ENCODE measurements at regions of chr10 and their contacts with region 1.

Region 1: DNA sequence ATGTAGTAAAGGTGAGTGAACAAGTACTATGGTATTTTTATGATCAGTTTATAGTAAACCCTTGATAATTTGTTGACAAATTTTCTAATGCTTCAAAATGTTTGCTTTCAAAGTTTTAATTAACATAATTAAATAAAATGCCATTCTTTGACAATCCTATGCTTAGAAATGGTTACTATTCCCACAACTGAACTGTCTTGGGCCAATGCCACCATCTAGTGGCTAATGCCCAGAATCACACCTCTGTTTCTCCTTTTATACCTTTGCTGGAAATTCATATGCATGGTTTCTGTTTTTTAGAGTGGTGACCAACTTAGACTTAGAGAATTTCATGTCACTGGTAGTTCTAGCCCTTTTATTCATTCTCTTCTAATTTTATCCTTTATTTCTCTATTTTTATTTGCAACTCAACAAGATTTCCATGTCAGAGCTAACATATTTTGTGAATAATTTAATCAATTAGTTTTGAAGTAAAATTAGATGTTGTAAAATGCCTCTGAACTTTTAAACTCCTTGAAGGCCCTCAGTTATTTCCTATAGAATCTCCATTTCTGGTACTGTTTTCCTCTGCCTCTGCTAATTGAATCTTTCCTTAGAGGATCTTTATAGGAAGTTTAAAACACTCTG is 31.1 kb downstream of the PCGF5 start:
- DNase-seq: peak; percentile 52
- H3K4me3 ChIP-seq: no peak overlapping the region
- H3K27ac ChIP-seq: no peak overlapping the region
- H3K4me1 ChIP-seq: peaks cover 0 to 3% (median 0%) of the 10 kb centered on the region in 4 donors
- H3K27me3 ChIP-seq: no peaks in the 10 kb centered on the region
- CTCF ChIP-seq: peak; percentile 88 to 94 (median 91)
- EP300 ChIP-seq: no peak
- POLR2A ChIP-seq: no peak

Region 2: GRCh38 chr10:90885176-90885575 is 366.4 kb before region 1 on chr10:
- in situ Hi-C with region 1: loop called in 1 of 4 experiments (anchors 25 kb)
- intact Hi-C with region 1: no loop called
- DNase-seq: no peak
- H3K4me3 ChIP-seq: no peak overlapping the region
- H3K27ac ChIP-seq: no peak overlapping the region
- H3K4me1 ChIP-seq: peaks cover 0 to 5% (median 2%) of the 10 kb centered on the region in 4 donors
- H3K27me3 ChIP-seq: no peaks in the 10 kb centered on the region
- CTCF ChIP-seq: no peak
- EP300 ChIP-seq: no peak
- POLR2A ChIP-seq: no peak

Region 3: GRCh38 chr10:90905925-90906324 is 345.6 kb before region 1 on chr10:
- in situ Hi-C with region 1: loop called in 3 of 4 experiments (anchors 10 to 25 kb)
- intact Hi-C with region 1: loop called (anchors 5 kb)
- DNase-seq: no peak
- H3K4me3 ChIP-seq: no peak overlapping the region
- H3K27ac ChIP-seq: no peak overlapping the region
- H3K4me1 ChIP-seq: no peaks in the 10 kb centered on the region
- H3K27me3 ChIP-seq: no peaks in the 10 kb centered on the region
- CTCF ChIP-seq: no peak
- EP300 ChIP-seq: no peak
- POLR2A ChIP-seq: no peak

Region 4: DNA sequence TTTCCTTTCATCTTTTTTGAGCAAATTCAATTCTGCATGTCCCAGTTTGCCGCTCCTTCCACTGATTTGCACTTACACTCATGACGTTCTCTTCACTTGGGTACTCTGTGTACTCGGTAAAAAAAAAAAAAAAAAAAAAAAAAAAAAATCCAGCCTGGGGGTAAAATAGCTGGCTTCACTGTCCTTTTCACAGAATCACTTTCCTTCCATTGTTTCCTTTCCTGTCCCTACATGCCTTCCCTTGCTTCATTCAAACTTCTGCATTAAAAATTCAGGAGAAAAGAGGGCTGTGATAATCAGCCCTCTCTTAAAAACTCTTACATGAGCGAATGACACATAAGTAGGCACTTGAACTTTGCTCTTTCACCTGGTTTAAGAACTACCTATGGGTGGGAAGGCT is 339.4 kb before region 1 on chr10:
- in situ Hi-C with region 1: loop called in 3 of 4 experiments (anchors 10 to 25 kb)
- intact Hi-C with region 1: loop called (anchors 5 kb)
- DNase-seq: no peak
- H3K4me3 ChIP-seq: no peak overlapping the region
- H3K27ac ChIP-seq: no peak overlapping the region
- H3K4me1 ChIP-seq: peaks cover 0 to 3% (median 0%) of the 10 kb centered on the region in 4 donors
- H3K27me3 ChIP-seq: no peaks in the 10 kb centered on the region
- CTCF ChIP-seq: no peak
- EP300 ChIP-seq: no peak
- POLR2A ChIP-seq: no peak

Region 5: DNA sequence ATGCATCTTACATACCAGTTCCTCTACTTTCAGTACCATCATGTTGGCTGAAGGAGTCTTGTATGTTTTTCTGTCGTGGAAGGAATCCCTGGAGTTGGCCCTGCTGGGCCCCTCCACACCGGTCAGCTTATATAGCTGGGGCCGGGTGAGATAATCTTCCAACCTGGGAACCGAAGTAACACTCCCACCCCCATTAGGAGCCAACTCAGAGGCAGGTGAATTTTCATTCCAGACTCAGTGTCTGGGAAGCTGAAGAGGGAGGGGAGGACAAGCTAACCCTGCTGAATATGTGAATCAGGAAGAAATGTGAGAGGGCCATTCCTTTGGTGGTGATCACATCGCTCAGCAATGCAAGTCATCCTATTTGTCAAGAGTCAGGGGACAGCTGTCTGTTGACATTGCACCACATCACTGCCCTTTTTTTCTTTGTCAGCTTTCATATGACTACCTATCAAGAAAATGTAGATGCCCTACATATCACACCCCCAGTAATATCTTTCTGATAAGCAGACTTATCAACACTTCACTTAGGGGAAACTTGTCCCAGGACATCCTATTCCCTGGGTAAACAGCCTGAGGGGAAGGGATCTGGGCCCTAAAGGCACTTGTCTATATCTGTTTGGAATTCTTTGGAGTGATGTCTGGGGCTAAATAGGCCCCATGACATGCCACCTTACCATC is 330.4 kb before region 1 on chr10 and contains the start of gene ANKRD1:
- in situ Hi-C with region 1: loop called in 2 of 4 experiments (anchors 10 to 25 kb)
- intact Hi-C with region 1: no loop called
- DNase-seq: no peak
- H3K4me3 ChIP-seq: no peak within 1 kb of the TSS
- H3K27ac ChIP-seq: no peak within 1 kb of the TSS
- H3K4me1 ChIP-seq: no peaks in the 10 kb centered on the region
- H3K27me3 ChIP-seq: peaks cover 4% of the 10 kb centered on the region
- CTCF ChIP-seq: no peak
- EP300 ChIP-seq: no peak
- POLR2A ChIP-seq: no peak
- total RNA-seq, gene ANKRD1: not detected

Region 6: GRCh38 chr10:91006001-91006751 is 245.4 kb before region 1 on chr10:
- in situ Hi-C with region 1: loop called (anchors 5 to 10 kb)
- intact Hi-C with region 1: loop called (anchors 5 kb)
- DNase-seq: peak; percentile 59
- H3K4me3 ChIP-seq: no peak overlapping the region
- H3K27ac ChIP-seq: no peak overlapping the region
- H3K4me1 ChIP-seq: peaks cover 0 to 6% (median 0%) of the 10 kb centered on the region in 4 donors
- H3K27me3 ChIP-seq: no peaks in the 10 kb centered on the region
- CTCF ChIP-seq: peak; percentile 83 to 95 (median 93)
- EP300 ChIP-seq: no peak
- POLR2A ChIP-seq: no peak

Region 7: GRCh38 chr10:91088300-91089140 is 163.0 kb before region 1 on chr10:
- in situ Hi-C with region 1: loop called in 2 of 4 experiments (anchors 5 to 10 kb)
- intact Hi-C with region 1: loop called (anchors 10 kb)
- DNase-seq: no peak
- H3K4me3 ChIP-seq: no peak overlapping the region
- H3K27ac ChIP-seq: no peak overlapping the region
- H3K4me1 ChIP-seq: no peaks in the 10 kb centered on the region
- H3K27me3 ChIP-seq: no peaks in the 10 kb centered on the region
- CTCF ChIP-seq: peak in 2 of 5 experiments; percentile 13 to 15
- EP300 ChIP-seq: no peak
- POLR2A ChIP-seq: no peak

Region 8: DNA sequence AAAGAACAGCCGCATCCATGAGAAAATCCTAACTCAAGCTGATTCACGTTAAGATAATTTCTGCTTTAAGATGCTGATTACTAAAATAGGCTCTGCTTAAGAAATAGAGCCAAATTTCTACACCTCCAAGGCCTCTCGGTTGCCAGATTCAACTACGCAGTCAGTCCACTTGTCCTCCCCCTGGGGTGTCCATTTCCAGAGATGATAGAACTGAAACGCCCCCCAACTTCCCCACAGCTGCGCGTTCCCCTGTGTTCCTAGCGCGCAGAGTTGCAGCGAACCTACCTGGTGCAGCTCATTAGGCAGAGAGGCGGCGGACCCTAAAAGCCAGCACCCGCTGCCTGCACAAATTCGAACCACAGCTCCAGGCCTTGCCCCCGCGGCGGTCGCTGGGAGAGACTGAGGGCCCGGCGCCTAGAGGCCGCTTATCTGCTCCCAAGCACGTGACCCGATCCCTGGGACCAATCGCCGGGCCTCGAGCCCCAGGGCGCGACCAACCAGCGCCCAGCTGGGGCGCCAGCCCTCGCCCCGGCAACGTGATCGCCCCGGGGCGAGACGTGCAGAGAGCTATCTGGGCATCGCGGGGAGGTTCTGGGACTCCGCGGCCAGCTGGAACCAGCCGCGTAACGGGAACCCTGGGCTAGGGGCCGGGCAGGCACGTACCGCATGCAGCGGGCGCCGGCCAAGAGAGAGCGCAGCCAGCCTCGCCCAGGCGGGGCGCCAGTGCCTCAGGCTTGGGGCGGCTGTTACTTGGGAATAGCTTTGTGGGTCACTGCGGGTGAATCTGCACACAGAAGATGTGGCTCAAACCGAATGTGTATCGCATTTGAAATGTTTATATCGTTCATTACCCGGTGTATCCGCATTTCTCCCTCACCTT is 381.4 kb after region 1 on chr10 and contains the start of gene PPP1R3C:
- in situ Hi-C with region 1: no loop called
- intact Hi-C with region 1: no loop called
- DNase-seq: peak; percentile 79
- H3K4me3 ChIP-seq: peak within 1 kb of the TSS; percentile 24 to 52 (median 35)
- H3K27ac ChIP-seq: peak within 1 kb of the TSS; percentile 72 to 87 (median 77)
- H3K4me1 ChIP-seq: peaks cover 0 to 26% (median 4%) of the 10 kb centered on the region in 4 donors
- H3K27me3 ChIP-seq: peaks cover 22% of the 10 kb centered on the region
- CTCF ChIP-seq: peak in 3 of 5 experiments; percentile 10 to 18 (median 15)
- EP300 ChIP-seq: no peak
- POLR2A ChIP-seq: peak; percentile 64
- total RNA-seq, gene PPP1R3C: 1.1 to 4.6 (median 3.0) TPM

Measured in transverse colon (tissue), 4 donors.